Mammary epithelial cell (primary cell): ENCODE measurements at regions of chr13 and their contacts with region 1.

Region 1: GRCh38 chr13:27449936-27450828 is at the start of gene MTIF3:
- DNase-seq: peak; percentile 94
- H3K4me3 ChIP-seq: peak within 1 kb of the TSS; percentile 58 to 97 (median 87)
- H3K27ac ChIP-seq: peak within 1 kb of the TSS; percentile 76
- H3K4me1 ChIP-seq: peaks cover 9% of the 10 kb centered on the region
- H3K27me3 ChIP-seq: no peaks in the 10 kb centered on the region
- CTCF ChIP-seq: peak; percentile 8 to 14
- total RNA-seq, gene MTIF3: 32.2 to 35.5 TPM

Region 2: DNA sequence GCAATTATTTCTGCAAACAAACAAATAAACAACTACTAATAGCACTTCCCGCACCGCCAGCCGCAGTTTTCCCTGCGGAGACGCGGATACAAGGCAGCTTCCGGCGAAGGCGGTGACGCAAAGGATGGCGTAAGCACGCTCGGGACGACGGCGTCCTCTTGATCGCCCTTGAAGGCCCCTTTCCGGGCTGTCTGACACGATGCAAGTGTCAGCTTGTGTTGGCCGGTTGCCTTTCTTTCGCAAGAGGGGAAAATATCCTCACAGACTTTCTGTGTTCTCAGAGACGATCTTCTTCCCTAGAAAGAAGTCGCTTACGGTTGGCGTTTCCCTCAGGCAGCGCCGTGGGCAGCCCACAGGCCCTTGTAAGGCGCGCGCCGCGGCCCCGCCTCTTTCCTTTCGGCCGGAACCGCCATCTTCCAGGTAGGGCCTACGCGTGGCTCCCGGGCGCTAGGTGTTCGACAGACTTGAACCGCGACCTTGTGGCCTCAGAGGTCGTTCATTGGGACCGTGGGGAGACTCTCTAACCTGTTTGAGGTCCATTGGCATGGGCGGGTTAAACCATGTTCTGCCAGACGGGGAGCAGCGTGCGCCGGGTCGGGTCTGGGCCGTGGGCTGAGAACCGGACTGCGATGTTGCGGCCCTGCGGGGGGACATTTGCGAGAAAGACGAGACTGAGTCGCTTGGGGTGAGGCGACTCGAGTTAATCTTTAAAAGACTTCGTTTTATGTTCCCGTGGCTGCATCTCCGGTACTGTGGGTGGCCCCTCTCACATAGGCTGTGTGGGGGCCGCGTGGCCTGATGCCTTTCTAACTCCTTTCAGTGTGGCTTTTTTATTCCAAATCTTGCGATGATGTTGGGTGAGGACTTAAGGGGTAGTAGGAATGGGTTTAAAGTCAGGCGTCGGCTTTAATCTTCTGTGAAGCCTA is 198.8 kb before region 1 on chr13 and contains the start of gene RPL21:
- CTCF ChIA-PET with region 1: no interaction called
- dilution Hi-C with region 1: no loop called
- in situ Hi-C with region 1: no loop called
- intact Hi-C with region 1: loop called (anchors 5 kb)
- DNase-seq: peak; percentile 88
- H3K4me3 ChIP-seq: peak within 1 kb of the TSS; percentile 77 to 97 (median 84)
- H3K27ac ChIP-seq: peak within 1 kb of the TSS; percentile 94
- H3K4me1 ChIP-seq: peaks cover 9% of the 10 kb centered on the region
- H3K27me3 ChIP-seq: no peaks in the 10 kb centered on the region
- CTCF ChIP-seq: no peak
- total RNA-seq, gene RPL21: 422 to 818 TPM

Region 3: GRCh38 chr13:27424246-27425157 is 25.7 kb before region 1 on chr13 and contains the start of gene GTF3A:
- CTCF ChIA-PET with region 1: interaction called, 5 read pairs
- dilution Hi-C with region 1: no loop called
- in situ Hi-C with region 1: no loop called
- intact Hi-C with region 1: loop called (anchors 1 kb)
- DNase-seq: peak; percentile 83
- H3K4me3 ChIP-seq: peak within 1 kb of the TSS; percentile 58 to 68 (median 62)
- H3K27ac ChIP-seq: peak within 1 kb of the TSS; percentile 64
- H3K4me1 ChIP-seq: peaks cover 33% of the 10 kb centered on the region
- H3K27me3 ChIP-seq: no peaks in the 10 kb centered on the region
- CTCF ChIP-seq: no peak
- total RNA-seq, gene GTF3A: 62.0 to 69.3 TPM

Region 4: DNA sequence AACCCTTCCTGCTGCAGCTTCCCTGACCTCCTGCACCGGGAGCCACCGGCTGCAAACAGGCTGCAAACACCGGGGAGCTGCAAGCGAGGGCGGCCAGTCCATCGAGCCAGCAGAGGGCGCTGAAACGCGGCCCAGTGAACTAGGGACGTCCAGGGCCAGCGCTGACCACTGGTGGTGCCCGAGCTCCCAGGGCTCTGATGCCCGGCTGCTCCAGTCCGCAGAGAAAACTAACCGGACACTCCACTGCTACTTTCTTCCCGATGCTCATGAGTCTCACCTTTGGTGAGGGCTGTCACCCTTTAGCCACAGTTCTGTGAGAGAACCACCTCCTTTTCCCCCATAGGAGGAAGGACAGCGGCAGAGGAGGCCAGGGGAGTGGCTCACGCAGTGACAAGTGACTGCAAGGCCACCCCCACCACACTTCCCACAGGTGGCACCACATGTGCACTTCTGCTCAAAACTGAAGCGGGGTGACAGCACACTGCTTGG is 83.0 kb after region 1 on chr13:
- CTCF ChIA-PET with region 1: no interaction called
- dilution Hi-C with region 1: loop called (anchors 5 kb)
- in situ Hi-C with region 1: no loop called
- intact Hi-C with region 1: no loop called
- DNase-seq: peak; percentile 62
- H3K4me3 ChIP-seq: no peak overlapping the region
- H3K27ac ChIP-seq: no peak overlapping the region
- H3K4me1 ChIP-seq: peaks cover 4% of the 10 kb centered on the region
- H3K27me3 ChIP-seq: no peaks in the 10 kb centered on the region
- CTCF ChIP-seq: peak; percentile 78 to 97